ENCODE measurements at regions of chr4 and their contacts with region 1.

Region 1: GRCh38 chr4:3346146-3346545 is 53.3 kb downstream of the RGS12 start:
- DNase-seq: peak; percentile 2
- ATAC-seq: peak; percentile 95

Region 2: GRCh38 chr4:3062471-3062870 is 283.7 kb before region 1 on chr4:
- intact Hi-C with region 1: no loop called
- DNase-seq: no peak
- ATAC-seq: no peak

Region 3: DNA sequence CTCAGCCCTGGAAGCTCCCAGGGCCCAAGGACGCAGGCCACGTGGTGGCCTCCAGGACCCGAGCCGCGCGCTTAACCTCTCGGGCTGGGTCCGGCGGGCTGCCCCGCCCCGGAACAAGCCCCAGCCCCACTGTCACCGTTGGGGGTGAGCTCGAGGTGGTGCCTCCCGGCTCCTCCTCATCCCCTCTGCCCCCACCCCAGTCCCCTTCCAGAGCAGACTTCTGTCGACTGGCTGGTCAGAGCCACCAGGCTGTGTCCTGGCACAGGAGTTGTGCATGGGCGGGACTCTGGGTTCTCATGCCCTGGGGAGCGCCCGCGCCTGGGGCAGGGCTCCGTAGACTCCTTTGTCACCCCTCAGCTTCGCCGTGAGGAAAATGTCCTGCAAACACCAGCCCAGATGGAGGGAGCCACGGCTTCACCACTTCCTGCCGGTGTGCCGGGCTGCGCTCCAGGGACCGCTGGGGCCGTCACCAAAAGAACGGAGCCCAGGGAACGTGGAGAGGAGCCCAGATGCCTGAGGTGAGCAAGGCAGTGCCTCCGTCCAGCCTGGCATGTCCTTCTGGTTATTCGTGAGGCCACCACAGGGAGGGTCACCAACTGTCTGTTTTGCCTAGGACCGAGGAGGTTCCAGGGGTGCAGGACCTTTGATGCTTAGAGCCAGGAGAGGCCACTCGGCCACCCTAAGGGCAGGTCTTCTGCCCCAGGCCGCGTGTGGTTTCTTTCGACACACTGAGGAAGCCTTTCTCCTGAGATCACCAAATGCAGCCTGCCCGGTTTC is 60.4 kb before region 1 on chr4:
- intact Hi-C with region 1: no loop called
- DNase-seq: peak; percentile 50
- ATAC-seq: peak; percentile 20

Region 4: DNA sequence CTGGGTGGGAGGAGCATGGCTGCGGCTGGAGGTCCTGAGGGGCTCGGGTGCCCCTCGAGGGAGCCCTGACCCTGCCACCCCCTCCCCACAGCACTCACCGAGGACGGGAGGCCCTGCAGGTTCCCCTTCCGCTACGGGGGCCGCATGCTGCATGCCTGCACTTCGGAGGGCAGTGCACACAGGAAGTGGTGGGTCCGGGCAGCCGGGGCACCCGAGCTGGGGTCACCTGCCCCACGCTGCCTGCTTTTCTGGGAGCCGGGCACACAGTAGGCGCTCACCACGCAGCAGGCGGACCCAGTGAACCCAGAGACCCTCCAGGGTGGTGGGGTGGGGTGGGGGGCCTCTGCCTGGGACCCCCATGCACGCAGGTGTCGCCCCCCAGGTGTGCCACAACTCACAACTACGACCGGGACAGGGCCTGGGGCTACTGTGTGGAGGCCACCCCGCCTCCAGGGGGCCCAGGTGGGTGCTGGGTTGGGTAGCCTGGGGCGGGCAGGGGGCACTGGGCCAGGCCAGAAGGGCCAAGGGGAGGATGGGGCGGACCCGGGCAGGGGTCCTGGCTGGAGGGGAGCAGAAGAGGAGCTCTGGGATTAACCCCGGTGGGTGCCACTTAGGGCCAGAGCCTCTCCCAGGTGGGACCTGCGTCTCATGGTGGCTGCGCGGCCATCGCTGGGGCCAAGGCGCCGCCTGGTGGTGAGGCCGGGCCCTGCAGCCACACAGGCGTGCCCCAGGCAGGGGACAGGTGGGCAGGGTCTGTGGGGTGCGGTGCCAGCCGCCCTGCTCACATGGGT is 97.0 kb after region 1 on chr4:
- intact Hi-C with region 1: loop called (anchors 2 kb)
- DNase-seq: peak; percentile 74
- ATAC-seq: peak; percentile 84

Region 5: GRCh38 chr4:3514806-3515460 is 168.8 kb after region 1 on chr4:
- intact Hi-C with region 1: loop called (anchors 10 kb)
- DNase-seq: no peak
- ATAC-seq: peak; percentile 49

Measured in Right ventricle myocardium superior (tissue), 1 donor.